ENCODE measurements at regions of chr14 and their contacts with region 1.

Region 1: GRCh38 chr14:63727774-63728728 is at the start of gene SGPP1:
- DNase-seq: peak; percentile 68
- H3K4me3 ChIP-seq: peak within 1 kb of the TSS; percentile 91 to 100 (median 92)
- H3K27ac ChIP-seq: peak within 1 kb of the TSS; percentile 46
- H3K4me1 ChIP-seq: peaks cover 12% of the 10 kb centered on the region
- H3K27me3 ChIP-seq: no peaks in the 10 kb centered on the region
- CTCF ChIP-seq: no peak
- total RNA-seq, gene SGPP1: 25.3 to 55.2 TPM

Region 2: GRCh38 chr14:63388763-63389431 is 339.2 kb before region 1 on chr14:
- CTCF ChIA-PET with region 1: no interaction called
- dilution Hi-C with region 1: no loop called
- in situ Hi-C with region 1: no loop called
- intact Hi-C with region 1: loop called (anchors 5 kb)
- DNase-seq: peak; percentile 26
- H3K4me3 ChIP-seq: no peak overlapping the region
- H3K27ac ChIP-seq: no peak overlapping the region
- H3K4me1 ChIP-seq: no peaks in the 10 kb centered on the region
- H3K27me3 ChIP-seq: no peaks in the 10 kb centered on the region
- CTCF ChIP-seq: peak; percentile 85 to 89

Region 3: DNA sequence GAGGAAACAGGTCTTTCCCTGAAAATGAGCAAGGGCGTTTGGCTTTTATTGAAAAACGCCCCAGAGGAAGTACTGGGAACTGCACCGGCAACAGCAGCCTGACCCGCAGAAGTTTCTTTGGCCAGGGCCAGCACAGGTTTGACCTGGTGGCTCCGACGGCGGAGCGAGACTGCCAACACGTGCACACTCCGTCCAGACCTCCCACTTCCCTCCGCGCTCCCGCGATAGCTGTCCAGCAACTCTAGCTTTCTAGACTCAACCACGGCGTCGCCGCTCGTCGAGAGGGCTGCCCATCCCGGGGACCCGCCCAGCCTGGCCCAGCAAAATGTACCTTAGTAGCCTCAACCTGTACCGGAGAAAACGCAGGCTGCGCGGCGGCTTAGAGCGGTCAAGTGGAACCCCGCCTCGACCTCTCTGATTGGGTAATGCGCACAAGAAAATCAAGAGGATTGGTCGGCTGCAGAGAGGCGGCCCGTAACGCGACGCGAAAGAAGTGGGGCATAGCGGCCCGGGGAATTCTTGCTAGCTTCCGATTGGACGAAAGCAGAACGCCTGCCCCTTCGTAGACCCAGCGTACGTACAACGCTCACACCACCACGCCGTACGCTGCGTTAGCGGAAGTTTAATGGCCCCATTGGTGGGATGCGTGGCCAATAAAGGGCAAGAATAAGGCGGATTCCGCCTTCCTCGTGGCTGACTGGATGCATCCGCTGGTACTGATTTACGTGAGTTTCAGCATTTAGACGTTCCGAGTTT is 86.4 kb before region 1 on chr14 and contains the start of gene WDR89:
- CTCF ChIA-PET with region 1: no interaction called
- dilution Hi-C with region 1: no loop called
- in situ Hi-C with region 1: no loop called
- intact Hi-C with region 1: loop called (anchors 1 kb)
- DNase-seq: peak; percentile 100
- H3K4me3 ChIP-seq: peak within 1 kb of the TSS; percentile 66 to 91 (median 77)
- H3K27ac ChIP-seq: peak within 1 kb of the TSS; percentile 97
- H3K4me1 ChIP-seq: peaks cover 3% of the 10 kb centered on the region
- H3K27me3 ChIP-seq: no peaks in the 10 kb centered on the region
- CTCF ChIP-seq: peak; percentile 77 to 83
- total RNA-seq, gene WDR89: 10.5 to 13.0 TPM

Region 4: DNA sequence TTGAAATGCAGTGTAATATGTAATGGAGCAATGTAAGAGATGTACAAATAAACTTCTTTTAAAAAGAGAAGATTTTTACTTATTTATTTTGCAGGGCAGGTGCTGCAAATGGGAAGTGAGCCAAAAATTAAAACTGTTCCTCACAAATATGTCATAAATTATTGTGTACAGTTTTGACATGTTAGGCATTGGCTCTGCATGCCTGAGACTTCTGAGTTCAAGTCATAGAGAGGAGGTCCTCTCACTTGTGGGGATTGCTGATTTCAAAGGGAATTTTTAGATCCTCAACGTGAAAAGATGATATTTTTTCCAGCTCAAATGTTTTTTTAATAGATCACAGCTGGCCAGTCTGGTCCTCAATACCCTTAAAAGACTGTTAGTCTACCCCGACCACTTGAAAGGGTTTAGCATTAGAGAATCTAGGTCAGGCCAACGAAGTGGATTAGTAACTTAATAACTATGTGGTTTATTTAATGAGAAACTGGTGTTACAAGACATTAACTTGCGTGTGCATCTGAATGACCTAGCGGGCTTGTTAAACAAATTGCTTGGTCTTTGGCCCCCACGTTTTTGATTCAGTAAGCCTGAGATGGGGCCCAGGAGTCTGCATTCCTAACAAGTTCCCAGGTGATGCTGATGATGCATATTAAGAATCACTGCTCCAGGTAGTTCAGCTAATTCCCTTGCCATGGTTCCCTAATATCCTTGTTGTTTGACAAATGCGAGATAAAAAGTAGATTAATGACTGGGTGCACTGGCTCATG is 55.5 kb before region 1 on chr14:
- CTCF ChIA-PET with region 1: no interaction called
- dilution Hi-C with region 1: no loop called
- in situ Hi-C with region 1: no loop called
- intact Hi-C with region 1: loop called (anchors 10 kb)
- DNase-seq: no peak
- H3K4me3 ChIP-seq: no peak overlapping the region
- H3K27ac ChIP-seq: no peak overlapping the region
- H3K4me1 ChIP-seq: no peaks in the 10 kb centered on the region
- H3K27me3 ChIP-seq: no peaks in the 10 kb centered on the region
- CTCF ChIP-seq: no peak

Region 5: GRCh38 chr14:63770187-63770807 is 42.2 kb after region 1 on chr14:
- CTCF ChIA-PET with region 1: no interaction called
- dilution Hi-C with region 1: loop called (anchors 10 kb)
- in situ Hi-C with region 1: no loop called
- intact Hi-C with region 1: loop called (anchors 2 kb)
- DNase-seq: peak; percentile 40
- H3K4me3 ChIP-seq: no peak overlapping the region
- H3K27ac ChIP-seq: no peak overlapping the region
- H3K4me1 ChIP-seq: peaks cover 11% of the 10 kb centered on the region
- H3K27me3 ChIP-seq: no peaks in the 10 kb centered on the region
- CTCF ChIP-seq: peak; percentile 54 to 72